ENCODE measurements at regions of chr5 and their contacts with region 1.

Region 1: DNA sequence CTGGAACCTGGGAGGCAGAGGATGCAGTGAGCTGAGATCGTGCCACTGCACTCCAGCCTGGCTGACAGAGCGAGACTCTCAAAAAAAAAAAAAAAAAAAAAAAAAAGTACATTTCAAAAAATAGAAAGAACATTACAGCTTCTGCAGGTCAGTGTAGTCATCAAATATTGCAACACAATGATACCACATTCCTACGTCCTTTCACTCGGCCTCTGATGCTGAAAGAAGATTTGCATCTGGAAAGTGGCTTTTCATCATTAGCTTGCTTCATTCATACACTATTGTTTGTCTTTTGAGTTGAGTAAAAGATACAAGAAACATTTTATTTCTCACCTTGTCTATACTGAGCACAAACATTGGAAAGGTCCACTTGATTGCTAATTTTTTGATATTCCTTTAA is 59.6 kb upstream of the CPLANE1 start:
- DNase-seq: peak; percentile 35
- ATAC-seq: no peak
- H3K4me3 ChIP-seq: no peak overlapping the region
- H3K27ac ChIP-seq: no peak overlapping the region
- H3K4me1 ChIP-seq: no peaks in the 10 kb centered on the region
- H3K27me3 ChIP-seq: no peaks in the 10 kb centered on the region
- CTCF ChIP-seq: no peak
- POLR2A ChIP-seq: no peak
- RAD21 ChIP-seq: no peak

Region 2: GRCh38 chr5:37043688-37044087 is 265.1 kb before region 1 on chr5:
- CTCF ChIA-PET with region 1: no interaction called
- POLR2A ChIA-PET with region 1: no interaction called
- dilution Hi-C with region 1: no loop called
- in situ Hi-C with region 1: no loop called
- intact Hi-C with region 1: loop called (anchors 10 kb)
- DNase-seq: no peak
- ATAC-seq: no peak; the same call in 1 of the 2 replicates
- H3K4me3 ChIP-seq: no peak overlapping the region
- H3K27ac ChIP-seq: no peak overlapping the region
- H3K4me1 ChIP-seq: no peaks in the 10 kb centered on the region
- H3K27me3 ChIP-seq: no peaks in the 10 kb centered on the region
- CTCF ChIP-seq: no peak
- POLR2A ChIP-seq: no peak
- RAD21 ChIP-seq: no peak

Region 3: DNA sequence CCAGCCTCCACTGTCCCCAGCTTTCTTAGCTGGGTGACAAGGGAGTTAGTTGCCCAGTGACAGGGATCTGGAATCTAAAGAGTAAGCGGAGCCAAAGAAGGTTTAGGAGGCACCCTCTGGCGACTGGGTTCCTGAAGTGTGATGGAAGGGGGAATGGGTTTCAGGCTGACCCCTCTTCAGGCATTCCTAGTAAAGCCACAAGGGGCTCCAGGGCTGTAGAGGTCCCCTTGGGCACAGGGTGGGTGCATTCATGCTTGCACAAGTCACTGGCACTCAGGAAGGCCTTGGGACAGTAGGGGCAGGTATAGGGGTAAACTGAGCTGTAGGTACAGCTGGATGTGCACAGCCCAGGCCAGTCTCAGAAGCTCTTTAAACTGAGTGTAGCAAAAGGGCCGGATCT is 133.9 kb before region 1 on chr5:
- CTCF ChIA-PET with region 1: no interaction called
- POLR2A ChIA-PET with region 1: no interaction called
- dilution Hi-C with region 1: no loop called
- in situ Hi-C with region 1: no loop called
- intact Hi-C with region 1: loop called (anchors 10 kb)
- DNase-seq: no peak
- ATAC-seq: no peak
- H3K4me3 ChIP-seq: no peak overlapping the region
- H3K27ac ChIP-seq: no peak overlapping the region
- H3K4me1 ChIP-seq: no peaks in the 10 kb centered on the region; the same call in 1 of the 2 replicates
- H3K27me3 ChIP-seq: no peaks in the 10 kb centered on the region
- CTCF ChIP-seq: no peak
- POLR2A ChIP-seq: no peak
- RAD21 ChIP-seq: no peak

Region 4: GRCh38 chr5:37248970-37249686 is 59.7 kb before region 1 on chr5 and contains the start of gene CPLANE1:
- CTCF ChIA-PET with region 1: no interaction called
- POLR2A ChIA-PET with region 1: interaction called, 17 read pairs
- dilution Hi-C with region 1: no loop called
- in situ Hi-C with region 1: no loop called
- intact Hi-C with region 1: no loop called
- DNase-seq: peak; percentile 74
- ATAC-seq: peak; percentile 97
- H3K4me3 ChIP-seq: peak within 1 kb of the TSS; percentile 83
- H3K27ac ChIP-seq: peak within 1 kb of the TSS; percentile 82
- H3K4me1 ChIP-seq: peaks cover 5% of the 10 kb centered on the region
- H3K27me3 ChIP-seq: no peaks in the 10 kb centered on the region
- CTCF ChIP-seq: no peak
- POLR2A ChIP-seq: peak; percentile 75
- RAD21 ChIP-seq: no peak
- total RNA-seq, gene CPLANE1: 17.9 and 19.7 TPM in 2 replicates

Region 5: GRCh38 chr5:37424441-37424840 is 115.6 kb after region 1 on chr5:
- CTCF ChIA-PET with region 1: no interaction called
- POLR2A ChIA-PET with region 1: no interaction called
- dilution Hi-C with region 1: no loop called
- in situ Hi-C with region 1: no loop called
- intact Hi-C with region 1: no loop called
- DNase-seq: no peak
- ATAC-seq: no peak
- H3K4me3 ChIP-seq: no peak overlapping the region
- H3K27ac ChIP-seq: no peak overlapping the region
- H3K4me1 ChIP-seq: no peaks in the 10 kb centered on the region
- H3K27me3 ChIP-seq: no peaks in the 10 kb centered on the region
- CTCF ChIP-seq: no peak
- POLR2A ChIP-seq: no peak
- RAD21 ChIP-seq: no peak

Region 6: DNA sequence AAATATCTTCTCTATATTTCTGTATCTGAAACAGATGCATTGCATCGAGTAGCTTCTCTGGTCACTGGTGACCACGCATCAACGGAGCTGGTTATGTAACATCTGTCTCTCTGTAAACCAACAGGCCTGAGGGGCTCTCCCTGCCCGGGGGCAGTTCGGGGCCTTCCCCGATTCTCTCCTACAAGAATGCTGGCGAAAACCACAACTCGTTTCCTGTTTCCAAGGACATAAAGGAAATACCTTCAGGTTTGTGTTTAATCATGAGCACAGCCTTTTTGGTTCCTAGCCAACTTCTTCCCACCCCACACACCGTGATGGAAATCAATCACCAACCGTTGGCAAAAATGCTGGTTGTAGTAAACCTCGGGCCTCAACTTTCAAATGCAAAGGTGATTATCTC is 505.9 kb after region 1 on chr5:
- CTCF ChIA-PET with region 1: no interaction called
- POLR2A ChIA-PET with region 1: no interaction called
- dilution Hi-C with region 1: no loop called
- in situ Hi-C with region 1: no loop called
- intact Hi-C with region 1: no loop called
- DNase-seq: peak; percentile 41
- ATAC-seq: no peak
- H3K4me3 ChIP-seq: no peak overlapping the region
- H3K27ac ChIP-seq: no peak overlapping the region
- H3K4me1 ChIP-seq: peaks cover 11% of the 10 kb centered on the region
- H3K27me3 ChIP-seq: no peaks in the 10 kb centered on the region
- CTCF ChIP-seq: no peak
- POLR2A ChIP-seq: no peak
- RAD21 ChIP-seq: no peak

Region 7: DNA sequence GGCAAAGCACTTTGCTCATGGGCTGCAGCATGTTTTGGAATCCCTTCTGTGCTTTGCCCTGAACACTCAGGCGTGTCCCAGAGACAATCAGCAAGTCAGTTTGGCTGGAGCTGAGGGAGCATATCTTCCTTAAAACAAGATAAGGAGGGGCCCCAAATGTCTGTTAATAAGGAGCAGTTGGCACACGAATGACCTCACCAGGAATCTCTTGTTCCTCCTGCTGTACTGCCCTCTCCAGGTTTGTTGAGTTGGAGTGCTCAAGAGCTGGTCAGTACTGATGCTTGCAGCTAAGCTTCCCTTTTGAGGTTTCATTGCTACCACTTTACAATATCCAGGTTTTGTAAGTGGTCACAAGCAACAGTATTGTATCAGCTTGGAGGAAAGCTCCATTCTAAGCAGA is 848.2 kb after region 1 on chr5:
- CTCF ChIA-PET with region 1: no interaction called
- POLR2A ChIA-PET with region 1: no interaction called
- dilution Hi-C with region 1: no loop called
- in situ Hi-C with region 1: no loop called
- intact Hi-C with region 1: no loop called
- DNase-seq: no peak
- ATAC-seq: no peak
- H3K4me3 ChIP-seq: no peak overlapping the region
- H3K27ac ChIP-seq: no peak overlapping the region
- H3K4me1 ChIP-seq: no peaks in the 10 kb centered on the region
- H3K27me3 ChIP-seq: no peaks in the 10 kb centered on the region; the same call in 1 of the 2 replicates
- CTCF ChIP-seq: no peak
- POLR2A ChIP-seq: no peak
- RAD21 ChIP-seq: no peak

Measured in IMR-90 (cell line).